ENCODE measurements at regions of chr3 and their contacts with region 1.

Region 1: GRCh38 chr3:187745201-187746058 is at the start of gene BCL6:
- DNase-seq: peak; percentile 94 to 96 (median 94)
- ATAC-seq: peak; percentile 68 to 84 (median 72)
- H3K4me3 ChIP-seq: peak within 1 kb of the TSS; percentile 54 to 89 (median 78)
- H3K27ac ChIP-seq: peak within 1 kb of the TSS; percentile 94 to 100 (median 98)
- H3K4me1 ChIP-seq: peaks cover 0 to 49% (median 14%) of the 10 kb centered on the region in 12 donors
- H3K27me3 ChIP-seq: no peaks in the 10 kb centered on the region
- CTCF ChIP-seq: peak in 2 of 12 donors; percentile 10 to 13
- POLR2A ChIP-seq: peak; percentile 84 to 92
- total RNA-seq, gene BCL6: 29.7 to 109 (median 62.0) TPM

Region 2: GRCh38 chr3:186680869-186681268 is 1064.6 kb before region 1 on chr3:
- intact Hi-C with region 1: no loop called
- DNase-seq: no peak
- ATAC-seq: no peak
- H3K4me3 ChIP-seq: no peak overlapping the region
- H3K27ac ChIP-seq: no peak overlapping the region
- H3K4me1 ChIP-seq: no peaks in the 10 kb centered on the region
- H3K27me3 ChIP-seq: peaks cover 0 to 11% (median 0%) of the 10 kb centered on the region in 9 donors
- CTCF ChIP-seq: no peak
- POLR2A ChIP-seq: no peak

Region 3: GRCh38 chr3:186732169-186732766 is 1013.2 kb before region 1 on chr3:
- intact Hi-C with region 1: no loop called
- DNase-seq: no peak
- ATAC-seq: no peak
- H3K4me3 ChIP-seq: no peak overlapping the region
- H3K27ac ChIP-seq: no peak overlapping the region
- H3K4me1 ChIP-seq: no peaks in the 10 kb centered on the region
- H3K27me3 ChIP-seq: peaks cover 0 to 4% (median 0%) of the 10 kb centered on the region in 9 donors
- CTCF ChIP-seq: no peak
- POLR2A ChIP-seq: no peak

Region 4: GRCh38 chr3:187507268-187507667 is 238.2 kb before region 1 on chr3:
- intact Hi-C with region 1: no loop called
- DNase-seq: no peak
- ATAC-seq: no peak
- H3K4me3 ChIP-seq: no peak overlapping the region
- H3K27ac ChIP-seq: no peak overlapping the region
- H3K4me1 ChIP-seq: no peaks in the 10 kb centered on the region
- H3K27me3 ChIP-seq: no peaks in the 10 kb centered on the region
- CTCF ChIP-seq: no peak
- POLR2A ChIP-seq: no peak

Region 5: GRCh38 chr3:187661267-187661666 is 84.2 kb before region 1 on chr3:
- intact Hi-C with region 1: no loop called
- DNase-seq: no peak
- ATAC-seq: no peak
- H3K4me3 ChIP-seq: no peak overlapping the region
- H3K27ac ChIP-seq: no peak overlapping the region
- H3K4me1 ChIP-seq: no peaks in the 10 kb centered on the region
- H3K27me3 ChIP-seq: peaks cover 0 to 8% (median 0%) of the 10 kb centered on the region in 9 donors
- CTCF ChIP-seq: no peak
- POLR2A ChIP-seq: no peak

Region 6: GRCh38 chr3:187968883-187969580 is 223.6 kb after region 1 on chr3:
- intact Hi-C with region 1: loop called in 1 of 10 experiments (anchors 5 kb)
- DNase-seq: no peak
- ATAC-seq: peak in 3 of 4 donors; percentile 11 to 28 (median 27)
- H3K4me3 ChIP-seq: no peak overlapping the region
- H3K27ac ChIP-seq: no peak overlapping the region
- H3K4me1 ChIP-seq: peaks cover 0 to 33% (median 5%) of the 10 kb centered on the region in 12 donors
- H3K27me3 ChIP-seq: no peaks in the 10 kb centered on the region
- CTCF ChIP-seq: no peak
- POLR2A ChIP-seq: no peak

Region 7: DNA sequence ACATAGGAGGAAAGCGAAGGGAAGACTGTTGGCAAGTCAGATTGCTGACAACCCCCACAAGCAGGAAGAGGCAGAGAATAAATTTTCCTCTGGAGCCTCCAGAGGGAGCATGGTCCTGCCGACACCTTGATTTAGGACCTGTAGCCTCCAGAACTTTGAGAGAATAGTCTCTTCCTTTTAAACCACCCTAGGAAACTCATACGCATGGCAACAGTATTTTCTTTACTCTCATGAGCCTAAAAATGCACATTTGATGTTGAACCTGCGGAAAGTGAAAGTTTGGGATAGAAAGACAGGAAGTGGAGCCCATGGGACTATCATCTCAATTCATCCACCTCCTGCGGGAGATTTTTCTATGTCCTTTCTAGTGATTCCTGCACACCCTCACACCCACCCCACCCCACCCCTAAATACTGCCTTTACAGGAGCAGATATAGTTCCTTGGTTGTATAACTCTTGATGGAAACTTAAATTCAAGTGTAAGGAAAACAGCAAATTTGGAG is 291.8 kb after region 1 on chr3:
- intact Hi-C with region 1: loop called in 9 of 10 experiments (anchors 1 to 10 kb)
- DNase-seq: peak in 2 of 5 donors; percentile 36 to 40
- ATAC-seq: peak; percentile 71 to 85 (median 82)
- H3K4me3 ChIP-seq: peak overlapping the region in 3 of 12 donors; percentile 7 to 34 (median 26)
- H3K27ac ChIP-seq: peak overlapping the region in 7 of 12 donors; percentile 49 to 67 (median 61)
- H3K4me1 ChIP-seq: peaks cover 0 to 24% (median 1%) of the 10 kb centered on the region in 12 donors
- H3K27me3 ChIP-seq: no peaks in the 10 kb centered on the region
- CTCF ChIP-seq: peak in 11 of 12 donors; percentile 26 to 64 (median 49)
- POLR2A ChIP-seq: no peak

Region 8: DNA sequence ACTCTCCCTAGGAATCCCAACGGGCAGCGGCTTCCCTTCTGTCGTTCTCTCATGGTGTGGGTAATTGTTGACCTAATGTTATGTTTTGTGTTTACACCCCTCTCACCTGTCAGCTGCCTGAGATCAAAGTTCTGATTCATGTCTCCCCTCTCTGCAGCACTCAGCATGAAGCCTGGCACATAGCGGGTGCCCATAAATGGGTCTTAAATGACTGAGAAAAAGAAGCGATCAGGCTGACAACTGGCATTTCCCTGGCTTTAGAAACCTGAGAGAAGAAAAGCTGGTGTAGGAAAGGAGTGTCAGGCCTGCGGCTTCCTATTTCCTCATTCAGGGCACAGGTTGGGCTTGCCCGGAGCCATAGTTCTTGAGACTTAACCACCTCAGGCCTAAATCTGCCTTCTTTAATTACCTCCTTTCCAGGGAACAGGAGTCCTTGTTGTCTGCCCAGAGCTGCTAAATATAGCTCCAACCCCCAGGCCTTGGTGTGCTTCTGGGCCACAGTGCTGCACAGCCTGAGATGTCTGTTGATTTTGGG is 440.4 kb after region 1 on chr3:
- intact Hi-C with region 1: loop called in 3 of 10 experiments (anchors 10 kb)
- DNase-seq: peak in 2 of 5 donors; percentile 27 to 31
- ATAC-seq: peak; percentile 63 to 72 (median 70)
- H3K4me3 ChIP-seq: no peak overlapping the region
- H3K27ac ChIP-seq: peak overlapping the region; percentile 6 to 88 (median 80)
- H3K4me1 ChIP-seq: peaks cover 0 to 76% (median 42%) of the 10 kb centered on the region in 12 donors
- H3K27me3 ChIP-seq: no peaks in the 10 kb centered on the region
- CTCF ChIP-seq: no peak
- POLR2A ChIP-seq: no peak

Region 9: DNA sequence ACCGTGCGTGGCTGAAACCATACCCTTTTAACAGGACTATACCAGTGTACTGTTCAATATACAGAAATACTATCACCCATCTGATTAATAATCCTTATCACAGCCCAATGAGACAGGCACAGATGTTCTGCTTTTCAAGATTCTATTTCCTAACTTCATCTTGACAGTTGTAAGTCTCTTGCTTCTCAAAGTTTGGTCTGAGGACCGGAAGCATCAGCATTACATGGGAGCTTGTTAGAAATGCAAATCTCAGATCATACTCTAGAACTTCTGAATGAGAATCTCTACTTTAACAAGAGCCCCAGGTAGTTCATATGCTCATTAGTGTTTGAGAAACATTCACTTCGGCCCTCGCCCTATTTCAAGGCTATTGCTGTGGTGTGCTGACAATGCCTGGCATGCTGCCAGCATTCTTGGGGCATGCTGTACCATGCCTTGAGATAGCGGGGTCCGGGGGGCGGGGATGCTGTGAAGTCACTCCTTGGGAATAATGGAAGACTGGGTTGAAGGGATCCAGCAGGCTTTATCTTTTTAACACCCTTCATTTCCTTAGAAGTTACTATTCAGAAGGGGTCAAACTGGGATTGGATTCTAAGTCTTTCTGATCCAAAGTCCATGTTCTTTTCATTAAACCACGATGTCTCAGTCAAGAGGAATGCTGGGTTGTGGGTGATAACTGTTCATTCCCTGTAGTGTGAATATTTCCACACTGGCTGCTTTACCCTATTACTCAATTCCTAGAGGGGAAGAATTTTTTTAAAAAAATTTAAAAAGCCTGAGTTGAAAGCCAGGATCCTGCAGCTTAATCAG is 603.2 kb after region 1 on chr3:
- intact Hi-C with region 1: loop called in 6 of 10 experiments (anchors 5 to 10 kb)
- DNase-seq: peak; percentile 66 to 91 (median 84)
- ATAC-seq: peak; percentile 67 to 77 (median 74)
- H3K4me3 ChIP-seq: no peak overlapping the region
- H3K27ac ChIP-seq: peak overlapping the region; percentile 41 to 77 (median 64)
- H3K4me1 ChIP-seq: peaks cover 6 to 65% (median 41%) of the 10 kb centered on the region in 12 donors
- H3K27me3 ChIP-seq: no peaks in the 10 kb centered on the region
- CTCF ChIP-seq: no peak
- POLR2A ChIP-seq: no peak

Region 10: GRCh38 chr3:188594139-188594538 is 848.7 kb after region 1 on chr3:
- intact Hi-C with region 1: loop called in 2 of 10 experiments (anchors 10 kb)
- DNase-seq: no peak
- ATAC-seq: peak in 3 of 4 donors; percentile 34 to 68 (median 58)
- H3K4me3 ChIP-seq: no peak overlapping the region
- H3K27ac ChIP-seq: peak overlapping the region in 5 of 12 donors; percentile 4 to 61 (median 37)
- H3K4me1 ChIP-seq: peaks cover 0 to 60% (median 15%) of the 10 kb centered on the region in 12 donors
- H3K27me3 ChIP-seq: no peaks in the 10 kb centered on the region
- CTCF ChIP-seq: no peak
- POLR2A ChIP-seq: no peak

Measured in heart left ventricle (tissue), 16 donors.